ENCODE measurements at regions of chr17 and their contacts with region 1.

Region 1: GRCh38 chr17:64506576-64507477 is at the start of gene CEP95:
- DNase-seq: peak; percentile 96 to 98 (median 98)
- ATAC-seq: peak; percentile 87 to 90
- H3K4me3 ChIP-seq: peak within 1 kb of the TSS; percentile 95
- H3K27ac ChIP-seq: peak within 1 kb of the TSS; percentile 100
- H3K4me1 ChIP-seq: peaks cover 2% of the 10 kb centered on the region
- H3K27me3 ChIP-seq: no peaks in the 10 kb centered on the region
- total RNA-seq, gene CEP95: 16.3 to 23.3 (median 19.4) TPM

Region 2: DNA sequence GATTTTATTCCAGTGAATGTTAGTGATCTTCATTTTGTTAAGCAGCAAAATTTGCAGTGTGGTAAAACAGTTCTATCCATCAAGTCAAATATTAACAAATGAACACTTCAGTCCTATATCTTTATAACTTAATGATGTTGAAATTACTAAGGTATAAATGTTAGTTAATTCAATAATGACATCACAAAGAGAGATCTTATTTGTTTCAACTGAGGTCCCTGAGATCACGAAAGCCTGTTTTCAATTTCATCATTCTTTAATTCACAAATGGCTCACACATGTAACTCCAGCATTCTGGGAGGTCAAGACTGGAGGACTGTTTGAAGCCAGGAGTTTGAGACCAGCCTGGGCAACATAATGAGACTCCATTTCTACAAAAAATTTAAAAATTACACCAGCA is 141.4 kb after region 1 on chr17:
- intact Hi-C with region 1: loop called in 1 of 4 experiments (anchors 5 kb)
- DNase-seq: no peak
- ATAC-seq: no peak
- H3K4me3 ChIP-seq: no peak overlapping the region
- H3K27ac ChIP-seq: no peak overlapping the region
- H3K4me1 ChIP-seq: peaks cover 2% of the 10 kb centered on the region
- H3K27me3 ChIP-seq: no peaks in the 10 kb centered on the region